Endothelial cell of umbilical vein (primary cell): ENCODE measurements at regions of chr9 and their contacts with region 1.

Region 1: DNA sequence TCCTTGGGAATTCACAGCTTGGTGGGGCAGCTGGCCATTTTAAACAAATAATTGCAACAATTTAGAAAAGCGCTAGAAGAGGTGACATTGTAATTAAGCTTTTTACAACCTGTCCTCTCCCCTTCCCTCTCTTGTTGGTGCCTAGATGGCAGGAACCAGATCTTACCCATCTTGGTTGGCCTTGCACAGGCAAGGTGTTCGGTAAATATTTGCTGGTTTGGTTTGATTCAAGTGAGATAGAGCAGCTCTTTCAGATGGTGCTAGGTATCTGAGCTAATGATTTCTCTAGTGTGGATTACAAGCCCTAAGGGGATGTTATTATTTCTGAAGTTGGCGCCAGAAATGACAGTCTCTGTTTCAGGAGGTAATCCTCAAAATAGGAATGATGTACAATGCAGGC is 159.3 kb downstream of the SEC61B start:
- DNase-seq: no peak
- H3K4me3 ChIP-seq: no peak overlapping the region
- H3K27ac ChIP-seq: no peak overlapping the region
- H3K4me1 ChIP-seq: peaks cover 7% of the 10 kb centered on the region
- H3K27me3 ChIP-seq: peaks cover 0 to 4% of the 10 kb centered on the region in 2 experiments
- CTCF ChIP-seq: no peak
- POLR2A ChIP-seq: no peak

Region 2: GRCh38 chr9:98056269-98057137 is 1324.9 kb before region 1 on chr9 and contains the start of gene NANS:
- CTCF ChIA-PET with region 1: no interaction called
- POLR2A ChIA-PET with region 1: no interaction called
- dilution Hi-C with region 1: no loop called
- intact Hi-C with region 1: no loop called
- DNase-seq: peak; percentile 99
- H3K4me3 ChIP-seq: peak within 1 kb of the TSS; percentile 60 to 91 (median 69)
- H3K27ac ChIP-seq: peak within 1 kb of the TSS; percentile 80
- H3K4me1 ChIP-seq: peaks cover 15% of the 10 kb centered on the region
- H3K27me3 ChIP-seq: no peaks in the 10 kb centered on the region
- CTCF ChIP-seq: peak in 1 of 2 donors; percentile 8
- POLR2A ChIP-seq: peak; percentile 93
- total RNA-seq, gene NANS: 72.5 and 85.1 TPM in 2 replicates

Region 3: DNA sequence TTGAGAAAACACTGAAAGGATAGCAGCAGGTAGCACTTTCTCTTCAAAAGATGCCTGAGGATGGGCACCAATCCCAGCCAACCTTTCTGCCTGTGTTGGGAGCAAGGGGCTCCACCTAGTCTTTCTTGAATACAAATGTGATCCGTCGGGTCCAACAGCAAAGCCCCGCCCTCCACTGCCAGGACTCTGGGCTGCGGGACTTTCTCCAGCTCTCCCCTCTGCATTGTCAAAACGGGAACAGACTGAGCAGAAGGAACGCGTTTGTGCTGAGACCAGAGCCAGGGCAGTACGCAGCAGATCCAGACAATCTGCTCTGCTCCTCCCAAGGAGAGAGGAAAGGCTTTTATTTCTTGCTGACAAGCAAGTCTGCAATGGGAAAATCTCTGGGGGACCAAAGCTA is 19.5 kb before region 1 on chr9:
- CTCF ChIA-PET with region 1: no interaction called
- POLR2A ChIA-PET with region 1: no interaction called
- dilution Hi-C with region 1: no loop called
- intact Hi-C with region 1: loop called (anchors 2 kb)
- DNase-seq: no peak
- H3K4me3 ChIP-seq: no peak overlapping the region
- H3K27ac ChIP-seq: no peak overlapping the region
- H3K4me1 ChIP-seq: no peaks in the 10 kb centered on the region
- H3K27me3 ChIP-seq: peaks cover 18 to 34% of the 10 kb centered on the region in 2 experiments
- CTCF ChIP-seq: no peak
- POLR2A ChIP-seq: no peak

Region 4: DNA sequence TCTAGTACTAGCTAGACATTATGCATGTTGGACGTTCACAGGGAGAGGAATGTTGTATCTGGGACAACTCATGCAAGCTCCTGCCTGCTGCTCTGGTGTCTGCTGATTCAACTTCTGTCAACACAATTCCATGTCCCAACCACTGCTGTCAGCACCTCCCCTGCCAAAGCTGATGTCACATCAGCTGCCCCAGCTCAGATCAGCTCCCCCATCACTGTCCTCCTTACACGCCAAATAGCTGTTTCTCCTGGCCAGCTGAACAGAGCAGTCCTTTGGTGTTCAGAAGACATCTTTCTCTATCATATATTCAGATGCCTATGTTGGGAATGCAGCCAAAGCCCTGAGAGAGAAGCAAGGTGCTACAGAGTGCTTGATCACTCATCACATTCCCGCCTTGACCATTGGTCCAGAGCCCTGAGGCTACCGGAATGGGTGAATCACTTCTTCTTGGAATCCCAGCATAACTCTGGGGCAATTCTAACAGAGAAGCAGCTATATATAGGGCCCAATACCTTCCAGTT is 64.1 kb after region 1 on chr9:
- CTCF ChIA-PET with region 1: no interaction called
- POLR2A ChIA-PET with region 1: no interaction called
- dilution Hi-C with region 1: no loop called
- intact Hi-C with region 1: no loop called
- DNase-seq: no peak
- H3K4me3 ChIP-seq: no peak overlapping the region
- H3K27ac ChIP-seq: no peak overlapping the region
- H3K4me1 ChIP-seq: no peaks in the 10 kb centered on the region
- H3K27me3 ChIP-seq: peaks cover 2 to 5% of the 10 kb centered on the region in 2 experiments
- CTCF ChIP-seq: no peak
- POLR2A ChIP-seq: no peak

Region 5: GRCh38 chr9:99474186-99474585 is 92.8 kb after region 1 on chr9:
- CTCF ChIA-PET with region 1: no interaction called
- POLR2A ChIA-PET with region 1: no interaction called
- dilution Hi-C with region 1: no loop called
- intact Hi-C with region 1: no loop called
- DNase-seq: no peak
- H3K4me3 ChIP-seq: no peak overlapping the region
- H3K27ac ChIP-seq: no peak overlapping the region
- H3K4me1 ChIP-seq: no peaks in the 10 kb centered on the region
- H3K27me3 ChIP-seq: peaks cover 3 to 12% of the 10 kb centered on the region in 2 experiments
- CTCF ChIP-seq: no peak
- POLR2A ChIP-seq: no peak